Activated CD4-positive, alpha-beta memory T cell treated with anti-CD3 and anti-CD28 coated beads, Interleukin-2, amount 10 ng/mL, durations not matched to agents 7 days and 5 days (primary cell): ENCODE measurements at regions of chr13 and their contacts with region 1.

Region 1: DNA sequence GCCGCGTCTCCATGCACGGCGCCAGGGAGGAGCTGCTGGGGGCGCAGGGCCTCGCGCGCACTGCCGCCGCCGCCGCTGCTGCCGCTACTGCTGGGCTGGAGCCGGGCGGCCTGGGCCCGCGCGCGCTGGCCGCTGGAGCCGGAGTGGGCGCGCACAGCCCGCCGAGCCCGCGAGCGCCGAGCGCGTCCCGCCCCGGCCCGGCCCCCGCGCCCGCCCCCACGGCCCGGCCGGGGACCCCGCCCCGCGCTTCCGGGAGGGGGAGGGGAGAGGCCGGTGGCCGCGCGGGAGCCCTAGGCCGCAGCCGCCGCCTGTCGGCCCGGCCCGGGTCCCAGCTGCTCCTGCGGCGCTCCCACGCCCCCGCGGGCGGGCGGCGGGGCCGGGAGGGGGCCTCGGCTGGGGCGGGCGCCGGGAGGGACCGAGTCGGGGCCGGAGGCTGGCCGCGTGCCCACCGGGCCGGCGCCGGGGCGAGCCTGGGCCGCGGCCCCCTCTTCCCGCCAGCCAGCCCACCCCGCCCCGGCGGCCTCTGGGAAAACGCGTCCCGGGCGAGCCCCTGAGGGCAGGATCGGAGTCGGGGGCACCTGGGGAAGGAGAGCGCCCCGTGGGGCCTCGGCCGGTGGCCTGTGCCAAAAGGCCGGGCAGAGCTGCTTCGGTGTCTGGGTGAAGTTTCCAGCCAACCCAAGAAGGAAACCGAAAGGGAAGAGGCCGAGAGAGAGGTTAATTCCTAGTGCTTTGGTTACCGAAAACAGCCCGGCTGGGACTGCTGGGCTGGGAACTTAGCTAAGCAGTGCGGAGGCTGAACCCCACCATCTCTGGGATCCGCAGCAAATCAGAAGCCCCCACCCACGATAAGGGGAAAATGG is at the start of gene STK24:
- DNase-seq: peak; percentile 72
- H3K4me3 Mint-ChIP-seq: peak within 1 kb of the TSS; percentile 94
- H3K27ac Mint-ChIP-seq: peak within 1 kb of the TSS; percentile 86
- H3K4me1 Mint-ChIP-seq: peaks cover 38% of the 10 kb centered on the region
- H3K27me3 Mint-ChIP-seq: no peaks in the 10 kb centered on the region
- total RNA-seq, gene STK24: 189 to 204 TPM

Region 2: DNA sequence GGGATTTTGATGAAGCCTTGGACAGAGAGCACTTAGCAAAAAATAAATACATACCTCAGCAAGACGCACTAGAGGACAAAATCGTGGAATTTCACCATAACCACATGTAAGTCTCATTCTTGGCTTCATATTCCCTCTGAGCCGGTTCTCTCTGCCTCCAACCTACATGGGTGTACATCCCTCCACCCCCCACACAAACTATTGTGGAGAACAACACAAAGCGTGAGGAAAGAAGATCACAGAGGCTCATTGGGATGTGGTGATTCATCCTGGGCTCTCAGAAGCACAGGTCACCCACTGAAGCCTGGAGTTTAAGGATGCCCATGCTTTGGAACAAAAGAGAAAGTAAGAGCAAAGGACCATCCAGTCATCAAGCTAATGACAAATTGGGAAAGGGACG is 192.5 kb before region 1 on chr13:
- CTCF ChIA-PET with region 1: no interaction called
- POLR2A ChIA-PET with region 1: no interaction called
- DNase-seq: no peak
- H3K4me3 Mint-ChIP-seq: no peak overlapping the region
- H3K27ac Mint-ChIP-seq: no peak overlapping the region
- H3K4me1 Mint-ChIP-seq: no peaks in the 10 kb centered on the region
- H3K27me3 Mint-ChIP-seq: peaks cover 26% of the 10 kb centered on the region

Region 3: DNA sequence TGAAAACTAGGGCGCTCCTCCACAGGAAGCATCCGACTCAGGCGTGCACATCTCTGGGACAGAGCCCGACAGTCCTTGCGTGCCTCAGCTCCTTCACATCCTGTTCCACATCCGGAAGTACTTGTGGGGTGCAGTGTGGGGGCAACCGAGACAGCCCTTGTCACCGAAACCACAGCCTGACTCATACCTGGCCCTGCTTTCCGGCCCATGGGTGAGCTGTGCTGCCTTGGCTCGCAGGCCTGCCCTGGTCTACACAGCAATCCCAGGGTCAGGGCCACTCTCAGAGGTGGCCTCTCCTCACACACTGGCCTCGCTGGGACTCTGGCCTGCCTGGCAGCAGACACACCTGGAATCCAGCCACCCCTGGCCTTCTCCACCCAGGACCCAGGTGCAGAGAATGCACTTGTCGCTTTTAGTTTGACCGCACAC is 100.6 kb before region 1 on chr13:
- CTCF ChIA-PET with region 1: interaction called, 3 read pairs
- POLR2A ChIA-PET with region 1: interaction called, 15 read pairs
- DNase-seq: peak; percentile 94
- H3K4me3 Mint-ChIP-seq: peak overlapping the region; percentile 49
- H3K27ac Mint-ChIP-seq: peak overlapping the region; percentile 83
- H3K4me1 Mint-ChIP-seq: peaks cover 81% of the 10 kb centered on the region
- H3K27me3 Mint-ChIP-seq: no peaks in the 10 kb centered on the region

Region 4: GRCh38 chr13:98509271-98510155 is 67.7 kb before region 1 on chr13:
- CTCF ChIA-PET with region 1: interaction called, 3 read pairs
- POLR2A ChIA-PET with region 1: interaction called, 18 read pairs
- DNase-seq: peak; percentile 69
- H3K4me3 Mint-ChIP-seq: peak overlapping the region; percentile 1
- H3K27ac Mint-ChIP-seq: peak overlapping the region; percentile 87
- H3K4me1 Mint-ChIP-seq: peaks cover 91% of the 10 kb centered on the region
- H3K27me3 Mint-ChIP-seq: no peaks in the 10 kb centered on the region

Region 5: DNA sequence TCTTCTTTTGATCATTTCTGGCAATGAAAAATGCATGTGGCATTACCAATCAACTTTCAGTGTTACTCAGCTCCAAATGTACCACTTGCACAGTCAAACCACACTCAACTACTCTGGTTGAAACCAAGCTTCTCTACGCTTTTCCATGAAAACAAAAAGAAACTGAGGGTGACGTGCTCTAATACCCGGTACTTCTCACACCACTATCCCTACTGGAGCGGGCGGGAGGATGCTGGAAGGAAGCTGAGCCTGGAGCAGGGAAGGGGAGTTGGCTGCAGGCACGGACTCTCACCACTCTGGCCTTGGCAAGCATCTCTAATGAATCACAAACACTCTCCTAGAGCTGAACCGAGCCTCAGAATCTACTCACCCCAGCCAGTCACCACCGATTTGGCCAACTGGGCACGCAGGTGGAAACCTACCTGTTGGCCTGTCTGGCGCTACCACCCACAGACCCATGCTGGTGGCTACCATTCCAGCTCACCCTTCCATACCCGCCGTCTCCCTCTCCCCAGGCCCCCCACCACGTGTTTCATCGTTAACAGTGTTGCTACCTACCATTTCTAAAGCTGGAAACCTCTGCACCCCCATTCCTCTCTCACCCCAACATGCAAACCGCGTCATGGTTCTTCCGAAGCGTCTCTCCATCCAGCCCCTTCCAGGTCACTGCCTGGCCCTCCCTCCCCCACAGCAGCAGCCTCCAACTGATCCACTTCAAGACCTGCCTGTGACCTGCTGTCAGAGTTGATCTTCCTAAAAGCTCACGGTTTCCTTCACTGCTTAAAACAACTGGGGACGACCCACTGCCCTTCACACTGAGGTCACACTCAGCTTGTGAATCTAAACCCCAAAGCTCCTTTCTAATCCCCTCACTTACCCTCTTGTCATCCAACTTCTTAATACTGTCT is 48.3 kb before region 1 on chr13:
- CTCF ChIA-PET with region 1: no interaction called
- POLR2A ChIA-PET with region 1: interaction called, 10 read pairs
- DNase-seq: peak; percentile 25
- H3K4me3 Mint-ChIP-seq: peak overlapping the region; percentile 49
- H3K27ac Mint-ChIP-seq: peak overlapping the region; percentile 73
- H3K4me1 Mint-ChIP-seq: peaks cover 90% of the 10 kb centered on the region
- H3K27me3 Mint-ChIP-seq: no peaks in the 10 kb centered on the region

Region 6: GRCh38 chr13:98556968-98557631 is 20.1 kb before region 1 on chr13:
- CTCF ChIA-PET with region 1: interaction called, 4 read pairs
- POLR2A ChIA-PET with region 1: interaction called, 26 read pairs
- DNase-seq: no peak
- H3K4me3 Mint-ChIP-seq: peak overlapping the region; percentile 4
- H3K27ac Mint-ChIP-seq: peak overlapping the region; percentile 68
- H3K4me1 Mint-ChIP-seq: peaks cover 76% of the 10 kb centered on the region
- H3K27me3 Mint-ChIP-seq: no peaks in the 10 kb centered on the region